ENCODE measurements at regions of chr6 and their contacts with region 1.

Region 1: DNA sequence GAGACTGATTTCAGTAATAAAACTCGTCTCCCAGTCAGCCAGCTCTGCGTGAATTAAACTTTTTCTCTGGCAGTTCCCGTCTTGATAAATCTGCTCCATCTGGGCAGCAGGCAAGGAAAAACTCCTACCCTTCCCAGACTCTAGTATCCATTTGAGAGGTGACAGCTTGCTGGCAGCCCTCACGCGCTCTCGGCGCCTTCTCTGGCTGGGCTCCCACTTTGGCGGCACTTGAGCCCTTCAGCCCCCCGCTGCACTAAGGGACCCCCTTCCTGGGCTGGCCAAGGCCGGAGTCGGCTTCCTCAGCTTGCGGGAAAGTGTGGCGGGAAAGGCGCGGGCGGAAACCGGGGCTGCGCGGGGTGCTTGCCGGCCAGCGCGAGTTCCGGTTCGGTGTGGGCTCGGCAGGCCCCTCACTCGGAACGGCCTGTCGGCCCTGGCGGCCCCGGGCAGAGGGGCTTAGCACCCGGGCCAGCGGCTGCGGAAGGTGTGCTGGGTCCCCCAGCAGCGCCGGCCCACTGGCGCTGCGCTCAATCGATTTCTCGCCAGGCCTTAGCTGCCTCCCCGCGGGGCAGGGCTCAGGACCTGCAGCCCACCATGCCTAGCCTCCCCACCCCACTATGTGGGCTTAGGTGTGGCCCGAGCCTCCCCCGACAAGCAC is 21.8 kb upstream of the GMPR start:
- DNase-seq: no peak
- H3K4me3 Mint-ChIP-seq: no peak overlapping the region
- H3K27ac Mint-ChIP-seq: no peak overlapping the region
- H3K4me1 Mint-ChIP-seq: peaks cover 7% of the 10 kb centered on the region
- H3K27me3 Mint-ChIP-seq: peaks cover 33% of the 10 kb centered on the region

Region 2: GRCh38 chr6:16108921-16109658 is 107.5 kb before region 1 on chr6:
- intact Hi-C with region 1: no loop called
- DNase-seq: no peak
- H3K4me3 Mint-ChIP-seq: no peak overlapping the region
- H3K27ac Mint-ChIP-seq: no peak overlapping the region
- H3K4me1 Mint-ChIP-seq: no peaks in the 10 kb centered on the region
- H3K27me3 Mint-ChIP-seq: peaks cover 7% of the 10 kb centered on the region

Region 3: GRCh38 chr6:16265351-16266341 is 49.0 kb after region 1 on chr6:
- intact Hi-C with region 1: loop called (anchors 1 kb)
- DNase-seq: no peak
- H3K4me3 Mint-ChIP-seq: no peak overlapping the region
- H3K27ac Mint-ChIP-seq: no peak overlapping the region
- H3K4me1 Mint-ChIP-seq: no peaks in the 10 kb centered on the region
- H3K27me3 Mint-ChIP-seq: peaks cover 5% of the 10 kb centered on the region

Measured in activated CD4-positive, alpha-beta T cell treated with anti-CD3 and anti-CD28 coated beads, Interleukin-2, amount 10 ng/mL, durations not matched to agents 24 days and 14 days (primary cell).